Sciatic nerve (tissue), 2 donors: ENCODE measurements at regions of chr1 and their contacts with region 1.

Region 1: GRCh38 chr1:171188388-171189266 is 3.5 kb downstream of the FMO2 start:
- DNase-seq: peak; percentile 60
- ATAC-seq: peak; percentile 48

Region 2: GRCh38 chr1:169576241-169576934 is 1612.2 kb before region 1 on chr1:
- intact Hi-C with region 1: loop called (anchors 5 kb)
- DNase-seq: no peak
- ATAC-seq: no peak

Region 3: DNA sequence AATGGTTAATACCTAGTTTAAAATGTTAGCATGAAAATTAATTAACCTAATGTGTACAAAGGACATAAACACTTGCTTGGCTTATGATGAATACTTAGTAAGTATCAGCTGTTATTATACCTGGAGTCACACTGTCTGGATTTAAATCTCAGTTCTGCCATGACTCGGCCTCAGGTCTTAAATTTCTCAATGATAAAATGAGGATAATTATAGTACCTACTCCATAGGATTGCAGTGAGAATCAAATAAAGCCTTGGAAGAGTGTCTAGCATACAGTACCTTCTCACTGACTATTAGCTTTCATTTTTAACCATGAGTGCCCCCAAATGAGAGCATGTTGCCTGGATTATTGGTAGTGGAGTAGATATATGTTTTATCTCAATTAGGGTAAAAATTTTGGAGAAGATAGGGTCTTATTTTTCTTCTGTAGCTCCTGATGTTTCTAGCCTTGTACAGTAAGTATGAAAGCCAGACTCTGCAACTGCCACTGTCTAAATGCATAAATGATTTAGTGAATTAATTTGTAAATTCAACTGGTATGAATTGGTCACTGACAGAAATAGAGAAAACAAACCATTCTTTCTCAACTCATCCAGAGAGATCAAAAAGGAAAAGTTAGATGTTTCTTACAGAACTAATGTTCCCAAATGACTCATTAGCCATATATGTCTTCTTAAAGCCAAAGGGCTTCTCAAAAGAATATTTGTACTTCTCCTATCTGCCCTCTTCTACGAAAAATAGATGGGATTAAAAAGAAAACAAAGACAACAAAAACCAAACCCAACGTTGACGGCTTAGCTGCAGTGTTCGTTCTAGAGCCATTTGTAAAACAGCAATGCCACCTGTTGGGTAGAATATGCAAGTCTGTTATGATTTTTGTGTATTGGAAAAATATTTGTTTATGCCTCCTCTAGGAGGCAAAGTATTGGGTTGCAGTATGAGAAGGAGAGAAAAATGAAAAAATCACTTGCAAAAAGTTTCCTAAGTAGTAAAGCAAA is 307.1 kb before region 1 on chr1:
- intact Hi-C with region 1: no loop called
- DNase-seq: no peak
- ATAC-seq: peak; percentile 88

Region 4: GRCh38 chr1:171141688-171142415 is 46.8 kb before region 1 on chr1:
- intact Hi-C with region 1: loop called (anchors 1 kb)
- DNase-seq: peak; percentile 70
- ATAC-seq: peak; percentile 86

Region 5: GRCh38 chr1:172269644-172270043 is 1081.0 kb after region 1 on chr1:
- intact Hi-C with region 1: no loop called
- DNase-seq: no peak
- ATAC-seq: no peak